Dorsolateral prefrontal cortex (tissue), 120 donors: ENCODE measurements at regions of chr21 and their contacts with region 1.

Region 1: DNA sequence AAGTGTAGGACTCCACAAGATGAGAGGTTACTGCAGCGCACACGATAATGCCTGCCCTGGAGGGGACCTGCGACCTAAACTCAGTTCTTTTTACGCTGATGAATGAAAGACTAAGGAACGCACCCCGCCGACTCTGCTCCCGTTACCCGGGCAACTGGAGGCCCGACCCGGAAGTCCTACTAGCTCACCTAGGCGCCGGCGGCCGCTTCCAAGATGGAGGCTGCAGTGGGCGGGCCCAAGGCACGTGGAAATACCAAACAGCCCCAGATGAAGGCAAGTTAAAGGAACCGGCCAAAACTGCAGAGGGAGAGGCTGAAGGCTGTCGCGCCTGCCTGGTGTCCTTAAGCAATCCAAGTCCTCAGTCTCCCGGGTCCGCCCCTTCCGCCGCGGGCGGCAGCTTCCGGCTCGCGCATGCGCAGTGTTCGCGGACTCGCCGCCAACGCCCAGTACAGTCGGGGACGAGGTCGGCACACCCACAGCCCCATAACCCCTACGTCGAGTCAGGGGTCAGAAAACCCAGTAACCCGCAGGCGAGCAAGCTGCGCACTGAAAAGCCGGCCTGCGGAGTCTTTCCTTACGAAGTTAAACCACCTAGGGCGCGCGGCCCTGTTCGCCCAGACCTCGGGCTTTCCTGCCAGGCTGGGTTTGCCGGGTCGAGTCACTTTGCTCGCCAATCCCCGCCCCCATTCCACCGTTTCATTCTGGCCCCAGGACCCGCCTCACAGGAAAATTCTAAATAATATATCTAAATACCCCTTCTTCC is at the start of gene SETD4:
- DNase-seq: peak; percentile 87 to 97 (median 93)
- H3K4me3 ChIP-seq: peak within 1 kb of the TSS; percentile 61 to 99 (median 90)
- H3K27ac ChIP-seq: peak within 1 kb of the TSS; percentile 66 to 99 (median 96)
- H3K27me3 ChIP-seq: no peaks in the 10 kb centered on the region
- CTCF ChIP-seq: peak in 22 of 56 donors; percentile 5 to 42 (median 25)
- total RNA-seq, gene SETD4: 18.7 to 44.9 (median 30.8) TPM

Region 2: GRCh38 chr21:36104317-36105300 is 44.3 kb after region 1 on chr21:
- intact Hi-C with region 1: loop called in 1 of 2 experiments (anchors 2 kb)
- DNase-seq: peak; percentile 34 to 83 (median 74)
- H3K4me3 ChIP-seq: peak overlapping the region; percentile 26 to 79 (median 60)
- H3K27ac ChIP-seq: peak overlapping the region in 58 of 59 donors; percentile 4 to 94 (median 85)
- H3K27me3 ChIP-seq: peaks cover 0 to 3% (median 0%) of the 10 kb centered on the region in 45 donors
- CTCF ChIP-seq: peak; percentile 46 to 91 (median 75)

Region 3: GRCh38 chr21:36113647-36114428 is 53.5 kb after region 1 on chr21:
- intact Hi-C with region 1: loop called in 1 of 2 experiments (anchors 5 kb)
- DNase-seq: no peak
- H3K4me3 ChIP-seq: peak overlapping the region in 1 of 59 donors; percentile 62
- H3K27ac ChIP-seq: peak overlapping the region in 52 of 59 donors; percentile 31 to 98 (median 90)
- H3K27me3 ChIP-seq: no peaks in the 10 kb centered on the region
- CTCF ChIP-seq: no peak